Astrocyte of the cerebellum (primary cell): ENCODE measurements at regions of chr9 and their contacts with region 1.

Region 1: DNA sequence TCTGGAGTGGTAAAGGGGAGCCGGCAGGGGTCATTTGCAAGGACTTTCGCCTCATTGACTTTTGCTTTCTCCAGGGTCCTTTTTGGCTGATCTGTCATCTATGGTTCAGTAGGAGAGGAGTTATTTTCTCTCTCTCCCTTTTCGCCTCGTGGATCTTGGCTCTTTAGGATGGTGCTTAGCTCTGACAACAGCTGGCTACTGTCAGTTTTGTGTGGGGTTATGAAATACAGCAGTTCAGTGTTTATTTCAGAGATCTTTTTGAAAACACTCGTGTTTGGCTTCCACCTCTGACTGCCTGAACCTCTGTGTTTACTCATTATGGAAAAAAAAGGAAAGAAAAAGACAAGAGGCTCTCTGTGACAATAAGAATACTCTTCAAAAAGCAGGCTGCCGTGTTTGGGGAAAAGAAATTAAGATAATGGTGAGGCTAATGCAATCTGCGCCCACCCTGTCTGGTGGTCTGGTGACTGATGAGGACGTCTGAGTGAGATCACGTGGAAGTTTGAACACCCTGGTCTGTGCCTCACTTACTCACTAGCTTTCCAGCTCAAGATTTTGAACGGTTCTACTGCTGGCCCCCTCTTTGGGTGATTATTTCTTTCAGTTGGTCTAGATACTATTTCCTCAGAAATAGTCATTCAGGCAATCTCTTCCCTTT is 567.7 kb downstream of the CAAP1 start:
- DNase-seq: no peak
- H3K4me3 ChIP-seq: no peak overlapping the region
- CTCF ChIP-seq: no peak

Region 2: GRCh38 chr9:25964239-25964638 is 360.7 kb before region 1 on chr9:
- in situ Hi-C with region 1: loop called (anchors 5 kb)
- DNase-seq: peak; percentile 69
- H3K4me3 ChIP-seq: no peak overlapping the region
- CTCF ChIP-seq: peak; percentile 66